Activated naive CD4-positive, alpha-beta T cell treated with anti-CD3 and anti-CD28 coated beads for 36 hours (primary cell): ENCODE measurements at regions of chr1 and their contacts with region 1.

Region 1: GRCh38 chr1:11907275-11908094 is 18.7 kb downstream of the KIAA2013 start:
- DNase-seq: peak; percentile 96
- H3K4me3 Mint-ChIP-seq: peak overlapping the region; percentile 96
- H3K27ac Mint-ChIP-seq: peak overlapping the region; percentile 97
- H3K4me1 Mint-ChIP-seq: peaks cover 35% of the 10 kb centered on the region
- H3K27me3 Mint-ChIP-seq: peaks cover 6% of the 10 kb centered on the region

Region 2: GRCh38 chr1:11681071-11681771 is 226.3 kb before region 1 on chr1 and contains the start of gene MAD2L2:
- CTCF ChIA-PET with region 1: no interaction called
- intact Hi-C with region 1: loop called (anchors 1 kb)
- DNase-seq: peak; percentile 92
- H3K4me3 Mint-ChIP-seq: peak within 1 kb of the TSS; percentile 85
- H3K27ac Mint-ChIP-seq: peak within 1 kb of the TSS; percentile 88
- H3K4me1 Mint-ChIP-seq: peaks cover 10% of the 10 kb centered on the region
- H3K27me3 Mint-ChIP-seq: no peaks in the 10 kb centered on the region
- total RNA-seq, gene MAD2L2: 86.7 to 88.3 TPM

Region 3: DNA sequence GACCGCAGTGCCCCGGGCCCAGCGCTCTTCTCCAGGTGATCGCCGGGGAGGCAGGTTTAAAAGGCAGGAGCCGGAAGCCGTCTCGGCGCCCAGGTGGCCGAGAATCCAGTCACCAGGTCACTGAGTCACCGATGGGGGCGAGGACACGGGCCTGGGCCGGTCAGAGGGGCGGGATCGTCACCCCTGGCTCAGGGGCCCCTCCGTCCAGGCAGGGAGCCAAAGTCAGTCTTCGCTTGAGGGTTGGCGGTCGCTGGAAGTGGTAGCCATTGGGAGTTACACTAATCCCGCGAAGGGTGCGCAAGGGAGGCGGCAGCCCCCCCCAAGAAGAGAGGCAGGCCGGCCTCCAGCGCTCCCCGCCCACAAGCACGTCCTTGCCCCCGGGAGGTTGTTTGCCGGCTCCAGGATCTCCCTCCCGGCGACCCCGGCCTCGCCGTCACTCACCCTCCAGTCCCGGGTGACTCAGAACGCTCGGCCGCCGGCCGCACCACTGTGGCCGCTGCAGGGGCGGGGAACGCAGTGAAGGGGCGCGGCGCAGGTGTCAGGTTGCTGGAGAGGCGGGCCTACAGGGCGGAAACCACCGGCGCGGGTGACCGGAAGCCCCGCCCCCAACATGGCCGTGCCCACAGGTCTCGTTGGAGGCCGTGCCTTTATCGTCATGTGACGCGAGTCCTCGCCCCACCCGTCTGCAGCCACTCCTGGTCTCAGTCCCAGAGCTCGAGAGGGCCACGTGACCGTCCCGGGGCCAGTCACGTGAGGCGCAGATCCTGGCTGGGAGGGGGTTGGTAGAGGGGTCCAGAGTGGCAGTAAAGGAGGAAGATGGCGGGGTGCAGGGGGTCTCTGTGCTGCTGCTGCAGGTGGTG is 101.8 kb before region 1 on chr1 and contains the starts of genes CLCN6 and MTHFR:
- CTCF ChIA-PET with region 1: no interaction called
- intact Hi-C with region 1: loop called (anchors 1 kb)
- DNase-seq: peak; percentile 99
- H3K4me3 Mint-ChIP-seq: peak within 1 kb of the TSS; percentile 99
- H3K27ac Mint-ChIP-seq: peak within 1 kb of the TSS; percentile 96
- H3K4me1 Mint-ChIP-seq: peaks cover 59% of the 10 kb centered on the region
- H3K27me3 Mint-ChIP-seq: no peaks in the 10 kb centered on the region
- total RNA-seq, gene CLCN6: 11.3 to 11.6 TPM
- total RNA-seq, gene MTHFR: 7.1 to 7.9 TPM

Region 4: GRCh38 chr1:11831945-11832725 is 75.3 kb before region 1 on chr1:
- CTCF ChIA-PET with region 1: no interaction called
- intact Hi-C with region 1: no loop called
- DNase-seq: no peak
- H3K4me3 Mint-ChIP-seq: no peak overlapping the region
- H3K27ac Mint-ChIP-seq: no peak overlapping the region
- H3K4me1 Mint-ChIP-seq: no peaks in the 10 kb centered on the region
- H3K27me3 Mint-ChIP-seq: no peaks in the 10 kb centered on the region

Region 5: GRCh38 chr1:11925938-11926292 is 18.4 kb after region 1 on chr1:
- CTCF ChIA-PET with region 1: interaction called, 3 read pairs
- intact Hi-C with region 1: loop called (anchors 1 kb)
- DNase-seq: peak; percentile 19
- H3K4me3 Mint-ChIP-seq: no peak overlapping the region
- H3K27ac Mint-ChIP-seq: no peak overlapping the region
- H3K4me1 Mint-ChIP-seq: peaks cover 33% of the 10 kb centered on the region
- H3K27me3 Mint-ChIP-seq: no peaks in the 10 kb centered on the region

Region 6: DNA sequence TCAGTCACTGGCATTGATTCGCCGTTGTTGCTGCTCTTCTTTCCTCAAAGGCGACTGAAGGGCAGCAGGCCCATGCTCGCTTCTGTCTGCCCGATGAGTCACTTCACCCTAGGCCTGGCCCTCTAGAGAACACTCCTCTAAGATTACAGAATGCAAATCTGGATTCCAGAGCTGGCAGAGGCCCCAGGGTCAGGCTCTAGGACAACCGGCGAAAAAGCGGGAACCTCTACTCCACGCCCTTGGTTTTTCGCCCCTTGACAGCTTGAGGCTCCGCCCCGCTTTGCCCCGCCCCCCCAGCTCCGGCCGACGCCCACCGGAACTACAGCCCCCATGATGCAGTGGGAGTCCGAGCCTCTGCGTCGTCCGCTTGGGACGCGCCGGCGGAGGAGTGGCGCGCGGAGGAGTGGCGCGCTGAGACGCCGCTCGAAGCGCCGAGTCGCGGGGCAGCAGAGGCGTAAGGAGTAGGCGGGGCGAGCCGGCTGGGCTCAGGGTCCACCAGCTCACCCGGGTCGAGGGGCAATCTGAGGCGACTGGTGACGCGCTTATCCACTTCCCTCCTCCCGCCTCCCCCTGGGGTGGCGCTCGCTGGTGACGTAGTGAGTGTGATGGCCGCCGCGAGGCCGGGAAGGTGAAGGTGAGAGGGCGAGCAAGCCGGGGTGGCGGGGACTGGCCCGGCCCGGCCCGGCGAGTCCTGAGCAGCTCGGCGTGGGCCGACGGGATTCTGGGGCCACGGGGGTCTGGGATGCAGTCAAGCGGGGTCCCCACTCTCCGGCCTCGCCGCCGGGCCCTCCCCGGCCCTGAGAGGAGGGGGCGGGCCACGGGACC is 72.6 kb after region 1 on chr1 and contains the start of gene MFN2:
- CTCF ChIA-PET with region 1: interaction called, 5 read pairs
- intact Hi-C with region 1: loop called (anchors 1 kb)
- DNase-seq: peak; percentile 94
- H3K4me3 Mint-ChIP-seq: peak within 1 kb of the TSS; percentile 97
- H3K27ac Mint-ChIP-seq: peak within 1 kb of the TSS; percentile 92
- H3K4me1 Mint-ChIP-seq: peaks cover 47% of the 10 kb centered on the region
- H3K27me3 Mint-ChIP-seq: no peaks in the 10 kb centered on the region
- total RNA-seq, gene MFN2: 47.4 to 52.3 TPM

Region 7: GRCh38 chr1:12047120-12047876 is 139.8 kb after region 1 on chr1:
- CTCF ChIA-PET with region 1: no interaction called
- intact Hi-C with region 1: loop called (anchors 5 kb)
- DNase-seq: peak; percentile 87
- H3K4me3 Mint-ChIP-seq: no peak overlapping the region
- H3K27ac Mint-ChIP-seq: no peak overlapping the region
- H3K4me1 Mint-ChIP-seq: peaks cover 8% of the 10 kb centered on the region
- H3K27me3 Mint-ChIP-seq: peaks cover 8% of the 10 kb centered on the region

Region 8: GRCh38 chr1:12177999-12178441 is 270.5 kb after region 1 on chr1:
- CTCF ChIA-PET with region 1: no interaction called
- intact Hi-C with region 1: loop called (anchors 2 kb)
- DNase-seq: peak; percentile 96
- H3K4me3 Mint-ChIP-seq: peak overlapping the region; percentile 69
- H3K27ac Mint-ChIP-seq: peak overlapping the region; percentile 90
- H3K4me1 Mint-ChIP-seq: peaks cover 88% of the 10 kb centered on the region
- H3K27me3 Mint-ChIP-seq: no peaks in the 10 kb centered on the region